IMR-90 (cell line): ENCODE measurements at regions of chr1 and their contacts with region 1.

Region 1: GRCh38 chr1:170562646-170563338 is 30.8 kb downstream of the GORAB start:
- DNase-seq: peak; percentile 87
- ATAC-seq: peak; percentile 92
- H3K4me3 ChIP-seq: no peak overlapping the region
- H3K27ac ChIP-seq: peak overlapping the region; percentile 95
- H3K4me1 ChIP-seq: peaks cover 14% of the 10 kb centered on the region
- H3K27me3 ChIP-seq: no peaks in the 10 kb centered on the region
- CTCF ChIP-seq: no peak
- POLR2A ChIP-seq: no peak
- RAD21 ChIP-seq: peak; percentile 14; the same call in 1 of the 2 replicates

Region 2: GRCh38 chr1:170545476-170545875 is 17.3 kb before region 1 on chr1:
- CTCF ChIA-PET with region 1: interaction called, 3 read pairs
- POLR2A ChIA-PET with region 1: no interaction called
- dilution Hi-C with region 1: no loop called
- in situ Hi-C with region 1: no loop called
- intact Hi-C with region 1: loop called (anchors 2 kb)
- DNase-seq: peak; percentile 88
- ATAC-seq: peak; percentile 86
- H3K4me3 ChIP-seq: no peak overlapping the region
- H3K27ac ChIP-seq: no peak overlapping the region
- H3K4me1 ChIP-seq: peaks cover 4% of the 10 kb centered on the region
- H3K27me3 ChIP-seq: no peaks in the 10 kb centered on the region
- CTCF ChIP-seq: no peak
- POLR2A ChIP-seq: no peak
- RAD21 ChIP-seq: peak; percentile 7; the same call in 1 of the 2 replicates